Activated CD4-positive, alpha-beta T cell treated with anti-CD3 and anti-CD28 coated beads, Interleukin-2, amount 10 ng/mL, durations not matched to agents 24 days and 14 days (primary cell): ENCODE measurements at regions of chr12 and their contacts with region 1.

Region 1: DNA sequence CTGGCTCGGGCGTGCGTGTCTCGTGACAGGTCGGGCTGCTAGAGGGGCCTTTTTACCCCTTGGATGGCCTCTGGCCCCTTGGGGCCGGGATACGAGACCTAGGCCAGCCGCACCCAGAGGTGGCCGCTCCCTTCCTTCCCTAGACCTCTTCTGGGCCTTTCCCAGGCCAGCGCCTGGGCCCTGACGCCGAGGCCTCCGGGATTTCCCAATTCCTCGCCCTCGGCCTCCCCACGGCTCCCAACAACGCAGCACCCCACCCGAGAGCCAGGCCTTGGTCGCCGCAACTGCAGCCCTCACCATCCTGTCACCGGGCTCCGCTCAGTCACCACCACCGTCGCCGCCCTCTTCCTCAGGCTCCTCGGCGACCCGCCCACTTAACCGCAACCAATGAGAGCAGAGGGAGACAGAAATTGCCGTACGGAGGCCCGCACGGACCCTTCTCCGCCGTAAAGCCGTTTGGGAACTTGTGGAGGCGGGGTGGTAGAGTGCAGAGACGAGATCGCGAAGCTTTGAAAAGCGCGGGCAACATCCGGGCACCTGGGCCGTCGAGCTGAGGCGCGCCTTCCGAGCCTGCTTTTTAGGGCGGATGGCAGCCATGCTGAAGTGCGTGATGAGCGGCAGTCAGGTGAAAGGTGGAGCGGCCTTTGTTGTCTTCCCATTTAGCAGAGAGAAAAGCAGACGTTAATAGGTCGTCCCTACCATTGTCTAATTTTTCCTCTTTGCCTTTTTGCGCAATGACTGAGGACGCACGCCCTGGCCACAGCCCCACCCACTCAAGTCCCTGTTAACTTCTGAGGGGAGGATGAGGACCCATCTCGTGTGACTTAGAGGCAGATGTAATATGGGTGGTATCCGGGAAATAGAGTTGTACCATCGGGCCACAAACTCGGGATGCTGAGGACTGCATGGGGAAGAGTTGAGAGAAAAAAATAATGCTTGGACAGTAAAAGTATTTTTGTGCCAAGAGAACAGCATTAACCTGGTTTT is at the starts of genes RAD9B and VPS29:
- DNase-seq: peak; percentile 100
- H3K4me3 Mint-ChIP-seq: peak within 1 kb of the TSS; percentile 99
- H3K27ac Mint-ChIP-seq: peak within 1 kb of the TSS; percentile 99
- H3K4me1 Mint-ChIP-seq: peaks cover 27% of the 10 kb centered on the region
- H3K27me3 Mint-ChIP-seq: peaks cover 2% of the 10 kb centered on the region
- total RNA-seq, gene RAD9B: 0.37 and 0.95 TPM in 2 replicates
- total RNA-seq, gene VPS29: 101 and 106 TPM in 2 replicates

Region 2: DNA sequence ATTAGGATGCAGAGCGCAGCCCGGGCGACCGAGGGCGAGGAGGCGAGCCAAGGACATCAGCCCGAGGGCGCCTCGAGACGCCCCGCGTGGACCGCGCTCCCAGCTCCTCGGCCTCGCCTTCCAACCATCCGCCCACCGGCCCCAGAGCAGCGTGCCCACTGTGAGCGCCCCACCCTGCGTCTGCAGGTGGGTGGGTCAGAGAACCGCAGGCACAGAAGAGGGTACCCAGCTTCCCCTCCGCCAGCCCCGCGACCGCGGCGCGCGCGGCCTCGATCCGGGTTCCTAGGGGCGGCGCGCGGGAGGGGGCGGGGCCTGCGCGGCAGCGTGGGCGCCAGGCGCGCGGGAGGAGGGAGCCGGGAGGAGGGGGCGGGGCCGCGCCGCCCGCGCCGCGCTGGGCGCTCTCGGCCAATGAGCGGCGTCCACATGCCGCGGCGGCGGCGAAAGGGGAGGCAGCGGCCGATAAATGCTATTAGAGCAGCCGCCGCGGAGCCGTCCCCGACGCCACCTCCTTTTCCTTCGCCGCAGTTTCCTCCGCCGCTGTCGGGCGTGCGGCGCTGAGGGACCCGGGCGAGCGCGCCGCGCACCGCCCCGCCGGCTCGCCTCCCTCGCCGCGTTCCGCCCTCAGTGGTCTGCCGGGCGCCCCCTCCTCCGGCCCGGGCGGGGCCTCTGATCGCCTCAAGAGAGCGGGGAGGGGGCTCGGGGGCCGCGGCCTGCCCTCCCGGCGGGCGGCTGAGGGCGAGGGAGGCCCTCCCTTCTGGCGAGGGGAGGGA is 221.1 kb before region 1 on chr12 and contains the start of gene ATP2A2:
- intact Hi-C with region 1: loop called (anchors 2 kb)
- DNase-seq: peak; percentile 97
- H3K4me3 Mint-ChIP-seq: peak within 1 kb of the TSS; percentile 97
- H3K27ac Mint-ChIP-seq: peak within 1 kb of the TSS; percentile 93
- H3K4me1 Mint-ChIP-seq: peaks cover 41% of the 10 kb centered on the region
- H3K27me3 Mint-ChIP-seq: peaks cover 14% of the 10 kb centered on the region
- total RNA-seq, gene ATP2A2: 219 and 222 TPM in 2 replicates

Region 3: GRCh38 chr12:110403146-110403975 is 98.7 kb before region 1 on chr12 and contains the start of gene ANAPC7:
- intact Hi-C with region 1: loop called (anchors 5 kb)
- DNase-seq: peak; percentile 96
- H3K4me3 Mint-ChIP-seq: peak within 1 kb of the TSS; percentile 99
- H3K27ac Mint-ChIP-seq: peak within 1 kb of the TSS; percentile 98
- H3K4me1 Mint-ChIP-seq: peaks cover 15% of the 10 kb centered on the region
- H3K27me3 Mint-ChIP-seq: no peaks in the 10 kb centered on the region
- total RNA-seq, gene ANAPC7: 71.4 and 77.4 TPM in 2 replicates

Region 4: DNA sequence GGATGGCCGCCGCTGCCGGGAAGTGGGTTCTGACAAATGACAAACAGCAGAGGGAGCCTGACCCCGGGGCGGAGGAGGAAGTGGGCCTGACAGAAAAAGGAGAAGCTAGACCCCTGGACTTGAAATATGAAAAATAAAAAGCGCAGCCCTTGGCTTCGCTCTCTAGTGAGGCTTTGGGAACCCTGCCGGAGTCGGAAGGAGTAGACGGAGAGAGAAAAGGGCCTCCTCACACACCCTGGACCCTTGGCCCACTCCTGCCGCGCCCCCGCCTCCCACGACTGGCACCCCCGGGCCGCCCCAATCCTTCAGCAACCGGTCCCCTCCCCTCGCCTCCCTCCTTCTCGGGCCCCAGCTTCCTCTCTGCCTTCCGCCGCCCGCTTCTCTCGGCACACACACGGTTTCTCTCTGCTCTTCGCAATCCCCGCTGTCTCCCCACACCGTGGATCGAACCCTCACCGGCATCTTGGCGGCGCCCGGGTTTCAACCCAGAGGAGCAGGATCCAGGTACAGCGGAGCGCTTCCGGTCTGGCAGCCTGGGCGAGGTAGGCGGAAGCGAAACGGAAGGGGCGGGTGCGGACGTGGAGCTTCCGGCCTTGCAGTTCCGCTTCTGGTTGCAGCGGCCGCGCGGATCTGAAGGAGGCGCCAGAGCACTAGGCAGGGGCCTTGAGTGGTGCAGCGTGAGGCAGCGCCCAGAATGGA is 52.1 kb before region 1 on chr12 and contains the start of gene ARPC3:
- intact Hi-C with region 1: loop called (anchors 1 kb)
- DNase-seq: peak; percentile 98
- H3K4me3 Mint-ChIP-seq: peak within 1 kb of the TSS; percentile 100
- H3K27ac Mint-ChIP-seq: peak within 1 kb of the TSS; percentile 100
- H3K4me1 Mint-ChIP-seq: peaks cover 37% of the 10 kb centered on the region
- H3K27me3 Mint-ChIP-seq: no peaks in the 10 kb centered on the region
- total RNA-seq, gene ARPC3: 285 and 300 TPM in 2 replicates

Region 5: DNA sequence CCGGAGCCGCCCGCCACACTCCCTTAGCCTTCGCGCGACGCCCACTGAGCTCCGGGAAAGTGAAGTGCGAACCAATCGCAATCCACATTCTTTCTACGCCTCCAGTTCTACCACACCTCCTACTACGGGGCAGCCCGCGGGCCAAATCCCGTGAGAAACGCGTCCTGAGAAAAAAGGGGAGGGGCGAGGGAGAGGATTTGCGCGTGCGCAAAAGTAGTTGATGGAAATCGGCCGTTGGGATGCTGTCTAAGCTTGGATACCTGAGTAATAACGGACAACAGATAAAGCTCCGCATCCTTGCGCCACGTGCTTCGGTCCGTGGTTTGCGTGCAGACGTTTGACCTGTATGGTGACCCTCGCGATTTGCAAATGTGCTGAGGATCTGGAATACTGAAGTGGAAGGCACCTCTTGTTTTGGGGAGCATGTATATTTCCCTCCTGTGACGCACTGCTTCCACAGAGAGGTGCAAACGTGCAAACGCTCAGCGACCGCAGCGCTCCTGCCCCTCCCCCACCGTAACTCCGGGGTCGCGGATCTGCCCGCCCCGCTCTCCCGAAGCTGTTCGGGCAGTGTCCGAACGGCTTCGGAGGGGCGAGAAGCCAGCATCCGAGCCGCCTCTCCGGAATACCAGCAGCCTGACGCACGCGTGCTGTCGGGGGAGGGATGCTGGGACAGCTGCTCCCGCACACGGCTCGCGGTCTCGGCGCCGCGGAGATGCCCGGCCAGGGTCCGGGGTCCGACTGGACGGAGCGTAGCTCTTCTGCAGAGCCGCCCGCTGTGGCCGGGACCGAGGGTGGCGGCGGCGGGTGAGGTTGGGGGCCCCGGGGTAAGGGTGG is 33.6 kb before region 1 on chr12 and contains the starts of genes FAM216A and GPN3:
- intact Hi-C with region 1: loop called (anchors 1 kb)
- DNase-seq: peak; percentile 99
- H3K4me3 Mint-ChIP-seq: peak within 1 kb of the TSS; percentile 89
- H3K27ac Mint-ChIP-seq: peak within 1 kb of the TSS; percentile 95
- H3K4me1 Mint-ChIP-seq: peaks cover 32% of the 10 kb centered on the region
- H3K27me3 Mint-ChIP-seq: no peaks in the 10 kb centered on the region
- total RNA-seq, gene FAM216A: 53.7 and 54.4 TPM in 2 replicates
- total RNA-seq, gene GPN3: 60.0 and 62.8 TPM in 2 replicates

Region 6: DNA sequence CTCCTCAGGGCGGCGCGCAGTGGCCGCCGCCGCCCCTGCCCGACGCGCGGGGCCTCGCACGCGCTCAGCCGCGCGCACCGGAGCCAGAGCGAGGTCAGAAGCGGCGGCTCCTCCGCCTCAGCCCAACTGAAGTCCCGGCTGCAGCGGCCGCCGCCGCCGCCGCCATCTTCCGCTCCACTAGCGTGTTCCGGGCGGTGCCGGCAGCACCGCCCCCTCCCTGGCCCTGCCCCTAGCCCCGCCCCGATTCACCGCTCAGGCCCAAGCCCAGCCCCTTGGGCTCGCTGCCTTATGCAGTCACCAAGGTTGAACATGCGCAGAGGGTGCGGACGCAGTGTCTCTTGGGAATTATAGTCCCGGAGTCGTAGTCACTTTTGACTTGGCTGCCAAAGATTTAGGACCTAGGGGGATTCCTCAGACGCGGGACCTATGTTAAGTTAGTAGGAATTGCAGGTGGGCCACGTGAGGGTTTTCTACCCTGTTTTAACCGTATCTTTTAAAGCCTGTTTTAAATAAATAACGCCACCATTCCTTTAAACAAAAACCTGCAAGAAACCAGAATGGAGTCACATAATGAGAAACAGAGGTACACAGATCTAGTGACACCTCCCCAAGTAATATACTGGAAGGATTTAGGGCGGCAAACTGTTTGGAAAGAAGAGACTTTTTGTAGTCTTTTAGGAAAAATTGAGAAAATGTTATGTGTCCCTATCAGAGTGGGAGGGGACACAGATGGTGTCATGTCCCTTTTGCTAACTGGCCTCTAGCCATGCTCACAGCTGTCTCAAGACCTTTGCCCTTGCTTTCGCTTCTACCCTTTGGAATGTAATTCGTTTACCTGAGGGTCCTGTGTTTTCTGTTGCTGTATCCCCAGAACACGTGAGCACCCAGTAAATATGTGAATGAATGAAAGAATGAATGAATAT is 81.4 kb after region 1 on chr12 and contains the start of gene PPTC7:
- intact Hi-C with region 1: loop called (anchors 2 kb)
- DNase-seq: peak; percentile 98
- H3K4me3 Mint-ChIP-seq: peak within 1 kb of the TSS; percentile 98
- H3K27ac Mint-ChIP-seq: peak within 1 kb of the TSS; percentile 97
- H3K4me1 Mint-ChIP-seq: peaks cover 58% of the 10 kb centered on the region
- H3K27me3 Mint-ChIP-seq: no peaks in the 10 kb centered on the region
- total RNA-seq, gene PPTC7: 57.9 and 58.4 TPM in 2 replicates

Region 7: DNA sequence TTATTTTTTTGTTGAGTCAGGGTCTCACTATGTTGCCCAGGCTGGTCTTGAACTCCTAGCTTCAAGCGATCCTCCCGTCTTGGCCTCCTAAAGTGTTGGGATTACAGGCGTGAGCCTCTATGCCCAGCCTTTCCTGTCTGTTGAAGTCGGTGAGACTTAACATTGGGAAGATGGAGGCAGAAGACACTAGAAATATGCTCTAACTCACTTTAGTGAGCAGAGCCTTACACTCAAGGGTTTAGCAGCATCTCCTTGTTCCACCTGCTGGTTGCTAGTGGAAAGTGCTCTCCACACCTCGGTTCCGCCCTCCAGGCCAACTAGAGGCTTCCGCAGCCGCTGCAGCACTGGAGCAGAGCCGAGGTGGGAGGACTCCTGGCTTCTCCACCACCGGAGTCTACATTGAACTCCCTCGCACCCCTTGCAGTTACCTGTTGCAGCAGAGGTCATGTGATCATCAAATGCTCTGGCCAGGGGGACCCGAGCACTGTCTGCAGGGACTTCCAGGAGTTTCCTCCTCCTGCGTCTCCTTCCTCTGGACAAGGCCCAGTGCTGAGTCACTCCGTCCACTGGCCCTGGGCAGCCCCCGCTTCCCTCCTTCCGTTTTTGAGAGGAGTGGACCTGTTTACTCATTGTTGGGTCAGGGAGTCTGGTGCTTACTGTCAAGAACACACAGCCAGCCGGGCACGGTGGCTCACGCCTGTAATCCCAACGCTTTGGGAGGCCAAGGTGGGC is 196.3 kb after region 1 on chr12:
- intact Hi-C with region 1: no loop called
- DNase-seq: peak; percentile 95
- H3K4me3 Mint-ChIP-seq: no peak overlapping the region
- H3K27ac Mint-ChIP-seq: peak overlapping the region; percentile 88
- H3K4me1 Mint-ChIP-seq: peaks cover 12% of the 10 kb centered on the region
- H3K27me3 Mint-ChIP-seq: no peaks in the 10 kb centered on the region